K562 (cell line): ENCODE measurements at regions of chrX and their contacts with region 1.

Region 1: DNA sequence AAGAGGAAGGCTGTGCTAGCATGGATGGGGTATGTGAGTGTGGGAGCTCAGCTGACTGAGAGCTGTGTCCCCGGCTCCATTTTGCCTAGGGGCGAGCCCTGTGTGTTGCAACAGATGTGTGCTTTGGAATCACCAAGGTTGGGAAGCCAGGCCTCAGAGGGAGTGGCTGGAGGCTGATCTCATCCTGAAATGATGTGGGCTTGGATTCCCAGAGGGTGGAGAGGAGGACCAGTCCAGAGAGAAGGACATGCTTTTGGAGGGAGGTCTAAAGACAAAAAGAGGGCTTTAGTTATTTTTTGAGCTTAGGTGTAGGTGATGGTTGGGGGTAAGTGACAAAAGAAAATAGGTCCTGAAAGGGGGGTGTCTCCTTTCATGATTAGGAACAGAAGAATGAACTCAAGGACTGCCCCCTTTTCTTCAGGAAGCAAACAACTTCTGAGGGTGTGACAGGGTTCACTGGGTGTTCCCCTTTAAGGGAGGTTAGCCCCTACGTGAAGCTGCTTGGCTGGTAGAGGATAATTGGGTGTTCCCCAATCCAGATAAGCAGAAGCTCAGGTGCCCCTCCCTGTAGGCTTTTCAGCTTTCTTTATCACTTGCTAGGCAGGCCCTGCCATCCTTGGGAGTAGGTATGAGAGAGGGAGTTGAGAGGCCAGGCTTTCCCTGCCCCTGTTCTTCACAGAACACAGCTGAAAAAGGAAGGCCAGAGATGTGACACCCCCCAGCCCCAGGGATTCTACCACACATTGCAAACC is 44.0 kb downstream of the RTL9 start:
- DNase-seq: peak; percentile 58 to 89 (median 68)
- ATAC-seq: peak; percentile 82
- H3K4me3 ChIP-seq: no peak overlapping the region
- H3K27ac ChIP-seq: peak overlapping the region; percentile 63
- H3K4me1 ChIP-seq: peaks cover 12 to 46% of the 10 kb centered on the region in 2 experiments; a peak in 4 of 5 replicates
- H3K27me3 ChIP-seq: no peaks in the 10 kb centered on the region
- CTCF ChIP-seq: no peak
- EP300 ChIP-seq: peak; percentile 46; the same call in 1 of the 2 replicates
- POLR2A ChIP-seq: no peak
- RAD21 ChIP-seq: no peak

Region 2: GRCh38 chrX:110304371-110304770 is 98.3 kb before region 1 on chrX:
- CTCF ChIA-PET with region 1: no interaction called
- POLR2A ChIA-PET with region 1: no interaction called
- in situ Hi-C with region 1: no loop called
- intact Hi-C with region 1: no loop called
- DNase-seq: no peak
- ATAC-seq: peak; percentile 73
- H3K4me3 ChIP-seq: no peak overlapping the region
- H3K27ac ChIP-seq: no peak overlapping the region
- H3K4me1 ChIP-seq: no peaks in the 10 kb centered on the region; a peak in 3 of 5 replicates
- H3K27me3 ChIP-seq: no peaks in the 10 kb centered on the region
- CTCF ChIP-seq: no peak
- EP300 ChIP-seq: no peak
- POLR2A ChIP-seq: no peak
- RAD21 ChIP-seq: no peak

Region 3: DNA sequence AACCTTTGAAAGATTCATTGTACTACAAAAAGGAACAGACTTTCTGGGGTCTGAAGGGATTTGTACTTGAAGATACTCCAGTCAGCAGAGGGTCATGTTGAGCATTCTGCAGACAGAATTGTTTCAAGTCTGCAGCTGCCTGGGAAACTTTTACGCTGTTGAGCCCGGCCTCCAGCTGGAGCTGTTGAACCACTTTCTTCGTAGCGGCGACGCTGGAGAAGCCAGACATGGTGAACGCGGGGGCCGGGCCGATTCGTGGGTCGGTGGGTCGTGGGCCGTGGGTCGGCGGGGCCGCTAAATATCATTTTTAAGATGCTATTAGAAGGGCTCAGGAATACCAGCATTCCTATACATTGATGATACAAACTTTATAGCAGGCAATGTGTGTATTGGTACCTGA is 56.0 kb before region 1 on chrX:
- CTCF ChIA-PET with region 1: no interaction called
- POLR2A ChIA-PET with region 1: no interaction called
- in situ Hi-C with region 1: no loop called
- intact Hi-C with region 1: loop called (anchors 1 kb)
- DNase-seq: peak in 2 of 4 experiments; percentile 18 to 73
- ATAC-seq: peak; percentile 94
- H3K4me3 ChIP-seq: 0 out of 2 replicates have a peak overlapping the region, but pooled peaks have one; percentile 9
- H3K27ac ChIP-seq: no peak overlapping the region; the same call in 2 of the 3 replicates
- H3K4me1 ChIP-seq: peaks cover 0 to 3% of the 10 kb centered on the region in 2 experiments; a peak in 3 of 5 replicates
- H3K27me3 ChIP-seq: no peaks in the 10 kb centered on the region
- CTCF ChIP-seq: peak; percentile 39 to 51 (median 49); a peak in 4 of 6 replicates
- EP300 ChIP-seq: no peak
- POLR2A ChIP-seq: no peak
- RAD21 ChIP-seq: peak in 1 of 2 experiments; percentile 71; a peak in 2 of 4 replicates

Region 4: GRCh38 chrX:110363244-110363643 is 39.4 kb before region 1 on chrX:
- CTCF ChIA-PET with region 1: no interaction called
- POLR2A ChIA-PET with region 1: no interaction called
- in situ Hi-C with region 1: no loop called
- intact Hi-C with region 1: loop called (anchors 5 kb)
- DNase-seq: peak; percentile 17 to 49 (median 29)
- ATAC-seq: peak; percentile 37; the same call in 2 of the 3 replicates
- H3K4me3 ChIP-seq: no peak overlapping the region
- H3K27ac ChIP-seq: peak overlapping the region; percentile 25; the same call in 1 of the 3 replicates
- H3K4me1 ChIP-seq: peaks cover 4 to 23% of the 10 kb centered on the region in 2 experiments; a peak in 3 of 5 replicates
- H3K27me3 ChIP-seq: no peaks in the 10 kb centered on the region
- CTCF ChIP-seq: no peak
- EP300 ChIP-seq: peak; percentile 55; the same call in 1 of the 2 replicates
- POLR2A ChIP-seq: no peak
- RAD21 ChIP-seq: no peak

Region 5: GRCh38 chrX:110374559-110374958 is 28.1 kb before region 1 on chrX:
- CTCF ChIA-PET with region 1: no interaction called
- POLR2A ChIA-PET with region 1: no interaction called
- in situ Hi-C with region 1: no loop called
- intact Hi-C with region 1: no loop called
- DNase-seq: peak; percentile 42 to 85 (median 62)
- ATAC-seq: peak; percentile 89
- H3K4me3 ChIP-seq: no peak overlapping the region
- H3K27ac ChIP-seq: peak overlapping the region; percentile 71
- H3K4me1 ChIP-seq: peaks cover 4 to 29% of the 10 kb centered on the region in 2 experiments; a peak in 2 of 5 replicates
- H3K27me3 ChIP-seq: no peaks in the 10 kb centered on the region
- CTCF ChIP-seq: no peak
- EP300 ChIP-seq: peak; percentile 65; the same call in 1 of the 2 replicates
- POLR2A ChIP-seq: no peak
- RAD21 ChIP-seq: no peak

Region 6: GRCh38 chrX:110462957-110463356 is 60.3 kb after region 1 on chrX:
- CTCF ChIA-PET with region 1: no interaction called
- POLR2A ChIA-PET with region 1: no interaction called
- in situ Hi-C with region 1: no loop called
- intact Hi-C with region 1: no loop called
- DNase-seq: no peak
- ATAC-seq: no peak
- H3K4me3 ChIP-seq: no peak overlapping the region
- H3K27ac ChIP-seq: no peak overlapping the region
- H3K4me1 ChIP-seq: no peaks in the 10 kb centered on the region
- H3K27me3 ChIP-seq: no peaks in the 10 kb centered on the region
- CTCF ChIP-seq: peak in 2 of 3 experiments; percentile 23 to 24; a peak in 2 of 6 replicates
- EP300 ChIP-seq: no peak
- POLR2A ChIP-seq: no peak
- RAD21 ChIP-seq: peak in 1 of 2 experiments; percentile 18; a peak in 1 of 4 replicates